Activated naive CD4-positive, alpha-beta T cell treated with anti-CD3 and anti-CD28 coated beads for 36 hours (primary cell): ENCODE measurements at regions of chr6 and their contacts with region 1.

Region 1: DNA sequence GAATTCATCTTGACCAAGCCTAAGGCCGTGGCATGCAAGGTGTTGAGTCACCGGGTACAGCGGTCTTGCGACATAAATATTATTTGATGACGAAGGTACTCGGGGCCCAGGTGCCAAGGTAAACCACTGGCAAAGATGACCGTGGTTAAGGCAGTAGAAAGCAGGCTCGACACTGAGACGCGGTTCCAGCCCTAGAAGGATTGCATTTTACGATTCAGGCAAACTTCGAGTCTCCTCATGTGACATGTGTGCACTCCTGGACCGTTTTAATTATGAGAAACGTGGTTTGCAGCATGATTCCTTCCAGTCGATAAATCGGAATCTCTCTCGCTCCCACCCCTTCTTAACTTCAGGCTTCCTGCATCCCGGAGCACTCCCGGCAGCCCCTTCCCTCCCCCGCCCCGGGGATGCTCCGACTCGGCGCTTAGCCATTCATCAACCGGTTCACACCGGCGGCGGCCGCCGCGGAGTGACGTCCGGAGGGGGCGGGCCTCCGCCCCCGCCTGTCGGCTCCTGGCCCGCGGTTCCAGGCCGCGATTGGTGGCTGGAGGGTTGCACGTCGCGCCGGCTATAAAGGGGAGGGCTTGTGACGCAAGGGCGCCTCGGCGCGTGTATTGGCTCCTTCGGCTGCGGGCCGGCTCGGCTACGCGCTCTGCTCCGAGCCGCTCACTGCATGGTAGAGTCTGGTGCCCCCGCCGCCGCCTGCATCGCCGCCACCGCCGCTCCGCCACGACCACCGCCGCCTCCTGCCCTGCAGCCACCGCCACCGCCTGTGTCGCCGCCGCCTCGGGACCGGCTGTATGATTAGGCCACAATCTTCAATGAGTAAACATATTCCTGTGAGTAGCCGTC is at the starts of genes LOC128125822 and PTP4A1:
- DNase-seq: peak; percentile 97
- H3K4me3 Mint-ChIP-seq: peak within 1 kb of the TSS; percentile 86
- H3K27ac Mint-ChIP-seq: peak within 1 kb of the TSS; percentile 95
- H3K4me1 Mint-ChIP-seq: peaks cover 28% of the 10 kb centered on the region
- H3K27me3 Mint-ChIP-seq: no peaks in the 10 kb centered on the region
- total RNA-seq, gene PTP4A1: 46.8 to 51.9 TPM

Region 2: GRCh38 chr6:63307581-63308246 is 264.4 kb before region 1 on chr6:
- CTCF ChIA-PET with region 1: no interaction called
- intact Hi-C with region 1: loop called (anchors 5 kb)
- DNase-seq: no peak
- H3K4me3 Mint-ChIP-seq: no peak overlapping the region
- H3K27ac Mint-ChIP-seq: no peak overlapping the region
- H3K4me1 Mint-ChIP-seq: no peaks in the 10 kb centered on the region
- H3K27me3 Mint-ChIP-seq: no peaks in the 10 kb centered on the region

Region 3: DNA sequence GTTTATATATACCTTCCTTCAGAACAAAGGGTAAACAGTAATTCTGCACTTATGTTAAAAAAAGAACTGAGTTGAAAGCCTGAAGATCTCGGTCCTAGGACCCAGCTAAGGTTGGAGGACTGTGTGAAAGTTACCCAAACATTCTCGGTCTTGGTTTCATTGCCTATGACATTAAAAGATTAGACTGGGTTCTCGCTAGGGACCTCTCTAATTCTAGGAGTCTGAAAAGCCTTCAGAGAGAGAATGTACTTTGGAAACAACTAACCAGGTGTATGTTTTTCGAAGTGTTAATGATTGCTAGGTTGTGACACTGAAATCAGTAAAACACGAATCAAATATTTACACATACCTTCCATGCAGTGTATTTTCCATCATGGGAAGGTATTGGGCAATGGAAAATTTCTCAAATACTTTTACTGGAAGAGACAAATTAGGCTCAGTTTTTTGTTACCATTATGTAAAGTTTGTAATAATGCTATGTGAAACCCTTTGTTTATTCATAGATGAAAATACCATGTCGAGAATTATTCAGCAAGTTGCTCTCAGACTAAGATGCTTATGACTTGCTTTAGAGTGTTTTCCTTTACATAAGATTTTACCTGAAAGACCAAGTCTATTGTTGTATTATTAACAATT is 113.5 kb before region 1 on chr6:
- CTCF ChIA-PET with region 1: no interaction called
- intact Hi-C with region 1: no loop called
- DNase-seq: no peak
- H3K4me3 Mint-ChIP-seq: no peak overlapping the region
- H3K27ac Mint-ChIP-seq: no peak overlapping the region
- H3K4me1 Mint-ChIP-seq: no peaks in the 10 kb centered on the region
- H3K27me3 Mint-ChIP-seq: no peaks in the 10 kb centered on the region

Region 4: GRCh38 chr6:63516186-63516944 is 55.7 kb before region 1 on chr6:
- CTCF ChIA-PET with region 1: no interaction called
- intact Hi-C with region 1: loop called (anchors 2 kb)
- DNase-seq: no peak
- H3K4me3 Mint-ChIP-seq: no peak overlapping the region
- H3K27ac Mint-ChIP-seq: no peak overlapping the region
- H3K4me1 Mint-ChIP-seq: peaks cover 6% of the 10 kb centered on the region
- H3K27me3 Mint-ChIP-seq: no peaks in the 10 kb centered on the region

Region 5: DNA sequence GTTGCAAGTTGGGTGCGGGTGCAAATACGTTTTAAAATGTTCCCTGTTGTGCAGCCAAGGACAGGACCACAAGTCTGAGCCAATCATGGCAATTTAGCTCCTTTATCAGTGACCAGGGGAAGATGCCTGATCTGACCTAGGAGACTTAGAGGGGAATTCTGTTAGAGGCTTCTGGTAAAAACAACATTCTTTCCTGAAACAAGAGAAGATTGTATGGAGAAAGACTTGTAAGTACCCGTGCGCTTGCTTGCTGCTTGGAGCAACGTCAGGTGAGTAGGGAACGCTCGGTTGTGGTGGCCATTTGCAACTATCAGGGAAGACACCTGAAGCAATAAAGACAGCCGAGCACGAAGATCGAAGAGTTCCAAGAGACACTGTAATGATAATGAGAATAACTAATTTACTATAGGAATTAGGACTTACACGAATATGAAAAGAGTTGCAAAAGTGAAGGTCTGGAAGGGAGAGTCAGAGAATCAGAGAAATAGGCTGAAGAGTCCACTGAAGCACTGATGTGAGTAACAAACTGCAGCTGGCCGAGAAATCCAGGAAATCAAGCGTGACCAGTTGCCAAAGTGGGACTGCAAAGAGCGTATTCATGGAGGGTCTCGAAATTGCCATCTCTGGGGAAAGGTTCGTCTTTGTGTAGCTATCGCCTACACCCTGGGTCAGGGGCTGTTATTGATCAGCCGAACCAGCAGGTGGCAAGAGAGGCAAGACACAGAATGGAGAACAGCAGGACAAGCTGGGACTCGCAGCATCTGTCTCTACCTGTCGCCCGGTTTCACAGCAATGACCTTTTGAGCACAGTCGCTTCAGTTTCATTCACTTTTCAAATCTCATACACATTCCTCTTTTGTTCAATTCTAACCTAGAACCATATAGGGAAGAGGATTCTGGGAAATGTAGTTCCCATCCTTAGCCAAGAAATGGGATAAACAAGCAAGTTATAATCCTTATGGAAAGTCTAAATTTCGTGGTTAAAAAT is 26.2 kb after region 1 on chr6:
- CTCF ChIA-PET with region 1: interaction called, 28 read pairs
- intact Hi-C with region 1: loop called (anchors 1 kb)
- DNase-seq: peak; percentile 85
- H3K4me3 Mint-ChIP-seq: peak overlapping the region; percentile 84
- H3K27ac Mint-ChIP-seq: no peak overlapping the region
- H3K4me1 Mint-ChIP-seq: peaks cover 10% of the 10 kb centered on the region
- H3K27me3 Mint-ChIP-seq: peaks cover 6% of the 10 kb centered on the region

Region 6: DNA sequence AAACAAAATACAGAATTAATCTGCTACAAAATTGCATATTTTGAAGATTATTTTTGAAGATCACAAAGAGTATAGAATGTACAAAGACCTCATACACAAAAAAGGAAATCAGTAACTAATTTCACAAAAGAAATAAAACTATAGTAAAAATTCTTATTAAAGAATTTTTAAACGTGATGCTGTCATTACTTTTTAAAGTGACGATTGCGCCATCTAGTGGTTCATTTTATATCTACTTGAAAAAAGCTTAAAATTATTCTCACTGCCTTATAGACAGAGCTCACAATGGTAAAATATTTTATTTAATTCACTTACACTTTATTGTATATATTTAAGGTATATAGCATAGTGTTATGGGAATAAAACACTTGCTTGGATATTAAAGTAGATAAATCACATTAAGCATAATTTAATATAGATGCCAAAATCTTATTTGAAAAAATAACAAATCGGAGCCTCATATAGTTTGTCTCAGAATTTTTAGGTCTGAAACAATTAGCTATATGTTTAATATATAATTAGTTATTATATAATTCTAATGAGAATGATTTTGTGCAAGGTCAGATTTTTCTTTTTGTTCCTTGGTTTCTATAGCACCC is 192.3 kb after region 1 on chr6:
- CTCF ChIA-PET with region 1: interaction called, 5 read pairs
- intact Hi-C with region 1: loop called (anchors 1 kb)
- DNase-seq: no peak
- H3K4me3 Mint-ChIP-seq: no peak overlapping the region
- H3K27ac Mint-ChIP-seq: no peak overlapping the region
- H3K4me1 Mint-ChIP-seq: no peaks in the 10 kb centered on the region
- H3K27me3 Mint-ChIP-seq: no peaks in the 10 kb centered on the region